ENCODE measurements at regions of chr20 and their contacts with region 1.

Region 1: GRCh38 chr20:9616833-9617489 is 102.6 kb downstream of the LAMP5 start:
- DNase-seq: peak; percentile 58
- ATAC-seq: peak; percentile 89

Region 2: DNA sequence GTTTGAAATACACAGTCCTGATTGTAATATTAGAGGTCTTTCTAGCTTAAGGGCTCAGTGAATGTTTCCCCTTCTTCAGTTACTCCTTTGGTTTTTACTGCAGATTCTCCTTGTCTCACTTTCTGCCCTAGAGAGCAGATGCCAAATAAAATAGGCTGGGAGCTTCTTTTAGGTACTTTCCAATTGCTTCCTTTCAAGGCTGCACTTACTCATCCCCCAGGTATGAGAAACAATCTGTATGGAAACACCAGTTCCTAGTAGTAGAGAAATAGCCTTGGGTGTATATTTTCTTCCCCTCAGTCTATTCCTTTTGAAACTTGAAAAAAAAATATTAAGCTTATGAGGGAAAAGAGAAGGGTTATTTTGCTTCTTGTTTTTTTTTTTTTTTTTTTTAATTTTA is 82.2 kb after region 1 on chr20:
- intact Hi-C with region 1: no loop called
- DNase-seq: no peak
- ATAC-seq: no peak

Region 3: GRCh38 chr20:9912858-9913434 is 296.0 kb after region 1 on chr20:
- intact Hi-C with region 1: loop called (anchors 10 kb)
- DNase-seq: no peak
- ATAC-seq: no peak

Region 4: GRCh38 chr20:11549172-11550103 is 1932.5 kb after region 1 on chr20:
- intact Hi-C with region 1: loop called (anchors 5 kb)
- DNase-seq: no peak
- ATAC-seq: no peak